CD4-positive, alpha-beta T cell (primary cell): ENCODE measurements at regions of chr16 and their contacts with region 1.

Region 1: GRCh38 chr16:17026600-17027242 is 444.0 kb downstream of the XYLT1 start:
- DNase-seq: peak in 5 of 14 experiments; percentile 24 to 59 (median 30)
- ATAC-seq: peak; percentile 90
- H3K4me3 ChIP-seq: no peak overlapping the region
- H3K4me3 Mint-ChIP-seq: peak overlapping the region; percentile 36
- H3K27ac ChIP-seq: no peak overlapping the region
- H3K27ac Mint-ChIP-seq: peak overlapping the region; percentile 85
- H3K4me1 ChIP-seq: peaks cover 16% of the 10 kb centered on the region
- H3K4me1 Mint-ChIP-seq: peaks cover 38% of the 10 kb centered on the region
- H3K27me3 ChIP-seq: no peaks in the 10 kb centered on the region
- H3K27me3 Mint-ChIP-seq: no peaks in the 10 kb centered on the region
- CTCF ChIP-seq: no peak

Region 2: DNA sequence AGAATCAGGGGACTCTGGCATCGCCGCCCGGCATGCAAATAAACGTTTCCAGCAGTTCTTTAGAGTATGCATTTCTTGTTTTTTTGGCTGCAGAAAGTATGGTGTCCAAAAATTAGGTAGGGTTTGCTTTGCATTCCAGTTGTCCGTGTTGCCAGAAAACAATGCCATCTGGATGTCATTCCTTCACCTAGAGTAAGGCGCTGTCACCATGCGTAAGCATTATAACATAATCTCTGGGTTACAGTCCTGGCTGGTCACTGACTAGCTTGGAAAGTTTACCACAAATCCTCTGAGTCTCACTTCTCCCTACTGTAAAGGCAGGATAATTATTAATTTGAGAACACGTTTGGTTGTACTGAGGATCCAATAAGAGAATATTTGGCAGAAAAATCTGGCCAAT is 13.7 kb before region 1 on chr16:
- CTCF ChIA-PET with region 1: no interaction called
- POLR2A ChIA-PET with region 1: interaction called, 4 read pairs
- intact Hi-C with region 1: loop called in 1 of 2 experiments (anchors 1 kb)
- DNase-seq: no peak
- ATAC-seq: no peak
- H3K4me3 ChIP-seq: peak overlapping the region; percentile 55
- H3K4me3 Mint-ChIP-seq: peak overlapping the region; percentile 74
- H3K27ac ChIP-seq: peak overlapping the region in 1 of 2 donors; percentile 76
- H3K27ac Mint-ChIP-seq: peak overlapping the region; percentile 86
- H3K4me1 ChIP-seq: peaks cover 11% of the 10 kb centered on the region
- H3K4me1 Mint-ChIP-seq: peaks cover 31% of the 10 kb centered on the region
- H3K27me3 ChIP-seq: no peaks in the 10 kb centered on the region
- H3K27me3 Mint-ChIP-seq: no peaks in the 10 kb centered on the region
- CTCF ChIP-seq: no peak